ENCODE measurements at regions of chr6 and their contacts with region 1.

Region 1: GRCh38 chr6:13427801-13428582 is 59.4 kb downstream of the GFOD1 start:
- DNase-seq: no peak
- H3K4me3 ChIP-seq: no peak overlapping the region
- H3K27ac ChIP-seq: peak overlapping the region; percentile 80
- H3K4me1 ChIP-seq: peaks cover 91% of the 10 kb centered on the region
- H3K27me3 ChIP-seq: no peaks in the 10 kb centered on the region
- CTCF ChIP-seq: no peak

Region 2: GRCh38 chr6:13487122-13488014 is 59.4 kb after region 1 on chr6 and contains the start of gene GFOD1:
- intact Hi-C with region 1: loop called (anchors 10 kb)
- DNase-seq: peak; percentile 92
- H3K4me3 ChIP-seq: peak within 1 kb of the TSS; percentile 93
- H3K27ac ChIP-seq: peak within 1 kb of the TSS; percentile 98
- H3K4me1 ChIP-seq: peaks cover 61% of the 10 kb centered on the region
- H3K27me3 ChIP-seq: no peaks in the 10 kb centered on the region
- CTCF ChIP-seq: peak; percentile 37
- total RNA-seq, gene GFOD1: 51.6 TPM

Region 3: GRCh38 chr6:13500264-13500663 is 72.3 kb after region 1 on chr6:
- intact Hi-C with region 1: no loop called
- DNase-seq: no peak
- H3K4me3 ChIP-seq: no peak overlapping the region
- H3K27ac ChIP-seq: no peak overlapping the region
- H3K4me1 ChIP-seq: peaks cover 21% of the 10 kb centered on the region
- H3K27me3 ChIP-seq: no peaks in the 10 kb centered on the region
- CTCF ChIP-seq: no peak